ENCODE measurements at regions of chr4 and their contacts with region 1.

Region 1: DNA sequence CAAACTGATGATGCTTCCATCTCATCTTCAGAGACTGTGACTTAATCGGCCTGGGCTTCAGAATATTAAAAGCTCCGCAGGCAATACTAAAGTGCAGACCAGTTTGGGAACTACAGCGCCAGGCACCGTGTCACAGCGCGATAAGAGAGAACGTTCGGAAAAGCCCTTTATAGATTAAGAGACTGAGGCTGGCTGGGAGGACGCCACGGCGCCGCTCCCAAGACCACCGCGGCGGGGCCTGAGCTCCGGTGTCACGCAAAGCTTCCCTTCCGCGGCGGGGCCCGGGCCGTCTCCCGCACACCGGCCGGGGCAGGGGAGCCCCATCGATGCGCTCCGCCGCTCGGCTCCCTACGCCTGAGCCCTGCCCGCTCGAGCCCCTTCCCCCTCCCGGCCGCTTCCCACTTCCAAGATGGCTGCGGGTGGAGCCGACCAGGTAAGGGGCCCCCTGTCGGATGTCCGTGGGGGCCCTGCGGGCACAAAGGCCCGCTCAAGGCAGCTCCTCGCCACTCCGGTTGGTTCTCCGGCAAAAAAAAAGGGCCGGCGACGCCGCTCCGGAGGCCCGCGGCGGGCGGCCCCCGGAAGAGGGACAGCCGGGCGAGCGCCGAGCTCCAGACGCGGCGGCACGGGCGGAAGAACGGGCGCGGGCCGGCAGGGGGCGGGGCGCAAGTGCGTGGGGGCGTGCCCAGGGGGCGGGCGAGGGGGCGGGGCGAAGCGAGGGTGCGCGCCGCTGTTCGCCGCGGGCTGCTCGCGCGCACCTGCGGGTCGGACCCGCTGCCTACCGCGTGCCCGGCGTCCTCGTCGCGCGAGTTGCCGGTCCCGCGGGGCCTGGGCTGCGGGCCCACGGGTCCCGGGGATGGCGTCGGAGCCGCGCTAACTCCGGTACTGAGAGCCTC is at the start of gene TBC1D14:
- DNase-seq: peak; percentile 86 to 97 (median 90)
- ATAC-seq: peak; percentile 93 to 96 (median 94)
- H3K4me3 ChIP-seq: peak within 1 kb of the TSS; percentile 69 to 85 (median 75)
- H3K27ac ChIP-seq: peak within 1 kb of the TSS; percentile 98 to 100 (median 99)
- H3K4me1 ChIP-seq: peaks cover 4 to 16% (median 5%) of the 10 kb centered on the region in 3 donors
- H3K27me3 ChIP-seq: no peaks in the 10 kb centered on the region
- CTCF ChIP-seq: no peak
- total RNA-seq, gene TBC1D14: 11.6 to 23.9 (median 15.2) TPM

Region 2: GRCh38 chr4:6840062-6840976 is 69.0 kb before region 1 on chr4:
- intact Hi-C with region 1: no loop called
- DNase-seq: no peak
- ATAC-seq: peak; percentile 68 to 74 (median 71)
- H3K4me3 ChIP-seq: no peak overlapping the region
- H3K27ac ChIP-seq: no peak overlapping the region
- H3K4me1 ChIP-seq: peaks cover 8 to 10% (median 9%) of the 10 kb centered on the region in 3 donors
- H3K27me3 ChIP-seq: no peaks in the 10 kb centered on the region
- CTCF ChIP-seq: no peak

Region 3: DNA sequence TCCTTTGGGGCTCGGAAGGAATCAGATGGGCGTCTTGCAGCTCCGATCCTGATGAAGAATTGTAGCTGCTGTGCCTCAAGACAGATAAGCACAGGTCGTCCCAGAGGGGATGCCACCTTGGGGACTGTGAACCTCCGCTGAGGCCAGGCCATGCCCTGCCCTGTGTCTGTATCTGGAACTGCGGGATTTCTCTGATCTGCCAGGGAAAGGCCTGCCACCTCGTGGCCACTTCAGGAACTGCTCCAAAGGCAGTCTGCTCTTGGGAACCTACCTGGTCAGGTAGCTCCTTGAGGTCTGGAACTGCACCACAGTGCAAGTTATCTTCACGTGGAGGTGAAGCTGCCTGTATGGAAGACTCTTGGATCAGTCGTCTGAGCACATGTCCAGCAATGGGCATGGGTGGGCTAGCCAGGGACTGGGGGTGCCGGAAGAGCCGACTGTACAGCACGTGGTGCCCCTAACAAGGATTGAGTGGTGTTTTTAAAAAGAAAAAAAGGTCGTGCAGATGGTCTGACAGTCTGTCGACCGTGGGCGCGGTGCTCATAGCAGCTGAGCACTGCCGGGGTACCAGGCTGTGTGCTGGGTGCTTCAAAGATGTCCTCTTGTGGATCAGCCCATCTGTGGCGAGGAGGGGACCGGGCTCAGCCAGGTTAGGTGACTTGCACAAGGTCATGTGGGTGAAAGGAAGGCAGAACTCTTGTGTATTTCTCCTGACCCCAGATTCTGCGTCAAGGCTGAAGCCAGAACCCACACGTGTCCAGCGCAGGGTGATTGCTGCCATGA is 161.6 kb after region 1 on chr4:
- intact Hi-C with region 1: loop called in 2 of 3 experiments (anchors 5 to 10 kb)
- DNase-seq: peak; percentile 79 to 97 (median 94)
- ATAC-seq: peak; percentile 30 to 58 (median 54)
- H3K4me3 ChIP-seq: no peak overlapping the region
- H3K27ac ChIP-seq: no peak overlapping the region
- H3K4me1 ChIP-seq: peaks cover 8 to 15% (median 13%) of the 10 kb centered on the region in 3 donors
- H3K27me3 ChIP-seq: no peaks in the 10 kb centered on the region
- CTCF ChIP-seq: peak; percentile 98 to 100 (median 99)